ENCODE measurements at regions of chr19 and their contacts with region 1.

Region 1: GRCh38 chr19:3250675-3251074 is 26.2 kb downstream of the CELF5 start:
- DNase-seq: peak in 8 of 9 experiments; percentile 7 to 62 (median 48)
- ATAC-seq: peak; percentile 81
- H3K4me3 ChIP-seq: no peak overlapping the region
- H3K4me3 Mint-ChIP-seq: no peak overlapping the region
- H3K27ac ChIP-seq: no peak overlapping the region
- H3K27ac Mint-ChIP-seq: no peak overlapping the region
- H3K4me1 ChIP-seq: no peaks in the 10 kb centered on the region
- H3K4me1 Mint-ChIP-seq: no peaks in the 10 kb centered on the region
- H3K27me3 ChIP-seq: peaks cover 0 to 3% of the 10 kb centered on the region in 2 experiments
- H3K27me3 Mint-ChIP-seq: peaks cover 16% of the 10 kb centered on the region
- CTCF ChIP-seq: peak; percentile 71

Region 2: DNA sequence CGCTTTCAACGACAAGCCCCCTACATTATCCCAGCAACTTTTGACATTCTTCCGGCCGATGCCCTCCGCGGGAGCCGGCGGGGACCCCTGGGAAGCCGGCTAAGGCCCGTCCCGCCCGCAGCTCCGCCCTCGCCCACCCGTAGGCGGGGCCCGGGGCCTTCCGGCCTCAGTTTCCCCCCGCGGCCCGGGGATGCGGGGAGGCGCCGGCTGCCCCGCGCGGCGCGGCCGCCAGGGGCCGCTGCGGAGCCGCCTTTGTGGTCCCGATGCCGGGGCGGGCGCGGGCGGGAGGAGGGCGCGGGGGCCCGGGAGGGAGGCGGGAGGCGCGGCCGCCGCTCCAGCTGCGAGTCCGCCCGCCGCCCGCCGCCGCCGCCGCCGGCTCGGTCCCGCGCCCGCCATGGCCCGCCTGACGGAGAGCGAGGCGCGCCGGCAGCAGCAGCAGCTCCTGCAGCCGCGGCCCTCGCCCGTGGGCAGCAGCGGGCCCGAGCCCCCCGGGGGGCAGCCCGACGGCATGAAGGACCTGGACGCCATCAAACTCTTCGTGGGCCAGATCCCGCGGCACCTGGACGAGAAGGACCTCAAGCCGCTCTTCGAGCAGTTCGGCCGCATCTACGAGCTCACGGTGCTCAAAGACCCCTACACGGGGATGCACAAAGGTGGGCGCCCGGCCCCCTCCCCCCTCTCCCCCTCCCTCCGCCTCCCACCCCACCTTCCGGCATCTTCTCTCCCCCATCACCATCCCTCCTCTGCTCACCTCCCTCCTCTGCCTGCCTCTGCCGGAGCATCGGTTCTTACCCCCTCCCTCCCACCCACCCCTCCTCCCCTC is 26.1 kb before region 1 on chr19 and contains the start of gene CELF5:
- CTCF ChIA-PET with region 1: interaction called, 6 read pairs
- POLR2A ChIA-PET with region 1: no interaction called
- intact Hi-C with region 1: loop called in 1 of 2 experiments (anchors 1 kb)
- DNase-seq: peak; percentile 19 to 77 (median 58)
- ATAC-seq: peak; percentile 84
- H3K4me3 ChIP-seq: no peak within 1 kb of the TSS
- H3K4me3 Mint-ChIP-seq: peak within 1 kb of the TSS; percentile 55
- H3K27ac ChIP-seq: no peak within 1 kb of the TSS
- H3K27ac Mint-ChIP-seq: no peak within 1 kb of the TSS
- H3K4me1 ChIP-seq: peaks cover 2% of the 10 kb centered on the region
- H3K4me1 Mint-ChIP-seq: peaks cover 1% of the 10 kb centered on the region
- H3K27me3 ChIP-seq: peaks cover 0 to 3% of the 10 kb centered on the region in 2 experiments
- H3K27me3 Mint-ChIP-seq: peaks cover 17% of the 10 kb centered on the region
- CTCF ChIP-seq: peak; percentile 29
- total RNA-seq, gene CELF5: 0.84 TPM in 1 of 2 experiments, not detected in the other

Region 3: DNA sequence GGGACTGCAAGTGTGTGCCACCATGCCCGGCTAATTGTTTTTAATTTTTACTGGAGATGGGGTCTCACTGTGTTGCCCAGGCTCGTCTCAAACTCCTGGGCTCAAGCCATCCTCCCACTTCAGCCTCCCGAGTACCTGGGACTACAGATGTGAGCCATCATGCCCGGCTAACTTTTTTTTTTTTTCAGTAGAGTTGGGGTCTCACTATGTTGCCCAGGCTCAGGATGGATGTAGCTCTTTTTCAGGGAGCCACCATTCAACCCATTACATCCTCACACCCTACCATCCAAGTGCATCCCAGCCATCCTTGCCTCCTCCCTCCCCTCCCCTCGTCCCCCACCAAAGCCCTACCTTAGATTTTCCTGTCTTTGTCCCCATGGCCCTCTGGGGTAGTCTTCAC is 11.3 kb before region 1 on chr19:
- CTCF ChIA-PET with region 1: no interaction called
- POLR2A ChIA-PET with region 1: no interaction called
- intact Hi-C with region 1: no loop called
- DNase-seq: no peak
- ATAC-seq: no peak
- H3K4me3 ChIP-seq: no peak overlapping the region
- H3K4me3 Mint-ChIP-seq: no peak overlapping the region
- H3K27ac ChIP-seq: no peak overlapping the region
- H3K27ac Mint-ChIP-seq: no peak overlapping the region
- H3K4me1 ChIP-seq: no peaks in the 10 kb centered on the region
- H3K4me1 Mint-ChIP-seq: no peaks in the 10 kb centered on the region
- H3K27me3 ChIP-seq: no peaks in the 10 kb centered on the region
- H3K27me3 Mint-ChIP-seq: peaks cover 6% of the 10 kb centered on the region
- CTCF ChIP-seq: no peak